Esophagus muscularis mucosa (tissue), 4 donors: ENCODE measurements at regions of chr7 and their contacts with region 1.

Region 1: DNA sequence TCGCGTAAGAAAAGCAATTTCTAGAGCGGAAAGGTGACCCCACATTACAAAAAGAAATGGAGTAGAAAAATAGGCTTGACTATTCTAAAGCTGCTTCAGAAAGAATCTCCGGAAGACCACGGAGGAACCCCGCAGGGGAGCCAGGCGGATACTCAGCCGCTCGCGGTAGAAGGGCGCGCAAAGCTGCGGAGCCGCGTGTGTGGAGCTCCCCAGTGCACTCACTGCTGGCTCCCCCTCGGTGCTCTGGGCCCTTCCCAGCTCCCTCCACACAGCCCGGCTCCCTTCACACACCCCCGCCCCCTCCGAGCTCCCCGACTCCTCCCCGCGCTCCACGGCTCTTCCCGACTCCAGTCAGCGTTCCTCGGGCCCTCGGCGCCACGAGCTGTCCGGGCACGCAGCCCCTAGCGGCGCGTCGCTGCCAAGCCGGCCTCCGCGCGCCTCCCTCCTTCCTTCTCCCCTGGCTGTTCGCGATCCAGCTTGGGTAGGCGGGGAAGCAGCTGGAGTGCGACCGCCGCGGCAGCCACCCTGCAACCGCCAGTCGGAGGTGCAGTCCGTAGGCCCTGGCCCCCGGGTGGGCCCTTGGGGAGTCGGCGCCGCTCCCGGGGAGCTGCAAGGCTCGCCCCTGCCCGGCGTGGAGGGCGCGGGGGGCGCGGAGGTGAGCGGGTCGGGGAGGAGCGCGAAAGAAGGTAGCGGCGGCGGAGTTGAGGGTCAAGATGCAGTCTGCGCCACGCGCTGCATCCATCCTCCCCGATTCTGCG is at the start of gene STEAP2:
- DNase-seq: peak; percentile 96
- H3K4me3 ChIP-seq: peak within 1 kb of the TSS; percentile 77 to 84 (median 79)
- H3K27ac ChIP-seq: peak within 1 kb of the TSS; percentile 87 to 91 (median 88)
- H3K4me1 ChIP-seq: peaks cover 0 to 29% (median 19%) of the 10 kb centered on the region in 4 donors
- H3K27me3 ChIP-seq: peaks cover 0 to 8% (median 0%) of the 10 kb centered on the region in 4 donors
- CTCF ChIP-seq: peak; percentile 46 to 79 (median 48)
- EP300 ChIP-seq: no peak
- POLR2A ChIP-seq: peak; percentile 52
- total RNA-seq, gene STEAP2: 16.1 to 22.5 (median 19.3) TPM

Region 2: GRCh38 chr7:90244909-90245851 is 33.6 kb after region 1 on chr7 and contains the start of gene CFAP69:
- intact Hi-C with region 1: loop called (anchors 5 kb)
- DNase-seq: peak; percentile 96
- H3K4me3 ChIP-seq: peak within 1 kb of the TSS; percentile 74 to 89 (median 78)
- H3K27ac ChIP-seq: peak within 1 kb of the TSS; percentile 51 to 70 (median 64)
- H3K4me1 ChIP-seq: peaks cover 12 to 30% (median 20%) of the 10 kb centered on the region in 4 donors
- H3K27me3 ChIP-seq: no peaks in the 10 kb centered on the region
- CTCF ChIP-seq: peak; percentile 18 to 48 (median 32)
- EP300 ChIP-seq: no peak
- POLR2A ChIP-seq: no peak
- total RNA-seq, gene CFAP69: 3.0 to 8.6 (median 7.5) TPM